AG04450 (cell line): ENCODE measurements at regions of chr12 and their contacts with region 1.

Region 1: GRCh38 chr12:56709759-56710376 is 15.2 kb downstream of the NACA start:
- DNase-seq: no peak
- H3K4me3 ChIP-seq: no peak overlapping the region
- H3K27ac ChIP-seq: no peak overlapping the region
- H3K27me3 ChIP-seq: no peaks in the 10 kb centered on the region
- CTCF ChIP-seq: no peak

Region 2: DNA sequence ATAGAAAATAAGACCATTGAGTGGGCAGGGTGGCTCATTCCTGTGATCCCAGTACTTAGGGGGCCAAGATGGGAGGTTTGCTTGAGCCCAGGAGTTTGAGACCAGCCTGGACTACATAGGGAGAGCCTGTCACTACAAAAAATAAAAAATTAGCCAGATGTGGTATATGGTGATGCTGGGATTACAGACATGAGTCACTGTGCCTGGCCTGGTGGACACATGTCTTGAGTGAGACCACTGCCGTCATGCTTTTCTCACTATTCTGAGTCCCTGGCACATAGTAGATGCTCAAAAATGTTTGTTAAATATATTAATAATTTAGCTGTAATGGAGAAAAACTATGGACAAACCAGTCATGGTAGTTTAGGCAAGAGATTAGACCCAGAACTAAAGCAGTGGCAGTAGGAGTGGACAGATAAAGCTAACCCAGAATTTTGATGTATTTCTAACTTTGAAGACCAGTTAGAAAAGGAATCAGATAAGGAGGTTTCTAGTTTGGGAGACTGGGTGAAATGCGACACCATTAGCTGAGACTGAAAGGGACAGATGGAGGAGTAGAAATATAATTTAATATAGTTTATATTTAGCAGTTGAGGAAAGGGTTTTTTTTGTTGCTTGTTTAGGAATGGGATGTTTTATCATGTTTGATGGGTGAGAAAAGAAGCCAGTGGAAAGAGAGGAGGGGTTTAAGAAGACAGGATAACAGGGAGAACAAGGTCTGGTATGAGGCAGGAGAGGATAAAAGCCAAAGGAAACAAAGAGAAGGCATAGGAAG is 14.4 kb before region 1 on chr12:
- CTCF ChIA-PET with region 1: no interaction called
- POLR2A ChIA-PET with region 1: interaction called, 10 read pairs
- DNase-seq: no peak
- H3K4me3 ChIP-seq: no peak overlapping the region
- H3K27ac ChIP-seq: peak overlapping the region; percentile 31
- H3K27me3 ChIP-seq: no peaks in the 10 kb centered on the region
- CTCF ChIP-seq: no peak